Endothelial cell of umbilical vein (primary cell): ENCODE measurements at regions of chr2 and their contacts with region 1.

Region 1: GRCh38 chr2:45993476-45993991 is 303.7 kb upstream of the EPAS1 start:
- DNase-seq: peak; percentile 75
- H3K4me3 ChIP-seq: no peak overlapping the region
- H3K27ac ChIP-seq: no peak overlapping the region
- H3K4me1 ChIP-seq: no peaks in the 10 kb centered on the region
- H3K27me3 ChIP-seq: no peaks in the 10 kb centered on the region
- CTCF ChIP-seq: peak; percentile 72 to 74
- POLR2A ChIP-seq: no peak

Region 2: GRCh38 chr2:45922571-45922988 is 71.0 kb before region 1 on chr2:
- CTCF ChIA-PET with region 1: no interaction called
- POLR2A ChIA-PET with region 1: no interaction called
- dilution Hi-C with region 1: no loop called
- intact Hi-C with region 1: no loop called
- DNase-seq: no peak
- H3K4me3 ChIP-seq: no peak overlapping the region
- H3K27ac ChIP-seq: no peak overlapping the region
- H3K4me1 ChIP-seq: peaks cover 9% of the 10 kb centered on the region
- H3K27me3 ChIP-seq: no peaks in the 10 kb centered on the region
- CTCF ChIP-seq: no peak
- POLR2A ChIP-seq: no peak

Region 3: DNA sequence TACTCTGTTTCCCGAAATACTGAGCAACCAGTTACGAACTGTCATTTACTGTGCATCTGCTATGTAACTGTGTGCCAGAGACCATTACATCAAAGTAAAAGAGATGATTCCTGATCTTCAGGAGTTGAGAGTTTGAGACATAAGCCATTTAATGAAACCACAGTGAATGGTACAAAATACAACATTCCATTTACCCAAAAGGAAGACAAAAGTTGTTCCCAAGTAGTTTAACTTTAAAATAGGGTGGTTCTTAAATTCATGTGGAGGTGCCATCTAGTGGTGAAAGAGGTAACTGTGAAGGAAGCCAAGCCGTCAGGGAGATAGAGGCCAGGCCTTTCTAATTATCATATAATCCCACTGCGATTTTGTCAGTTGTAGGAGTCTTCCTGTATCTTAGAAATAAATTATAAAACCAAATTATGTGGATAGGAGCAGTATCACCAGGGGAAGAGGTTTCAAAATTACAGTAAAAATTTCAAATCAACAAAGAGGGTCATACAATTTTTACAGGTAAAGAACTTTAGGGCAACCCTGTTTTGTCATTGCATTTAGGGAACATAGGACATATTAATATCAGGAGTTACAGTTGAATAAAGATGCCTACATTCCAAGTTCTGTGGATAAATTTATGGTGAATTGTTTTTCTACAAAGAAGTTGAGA is 371.4 kb after region 1 on chr2:
- CTCF ChIA-PET with region 1: interaction called, 26 read pairs
- POLR2A ChIA-PET with region 1: no interaction called
- dilution Hi-C with region 1: no loop called
- intact Hi-C with region 1: loop called (anchors 1 kb)
- DNase-seq: peak; percentile 70
- H3K4me3 ChIP-seq: no peak overlapping the region
- H3K27ac ChIP-seq: no peak overlapping the region
- H3K4me1 ChIP-seq: peaks cover 24% of the 10 kb centered on the region
- H3K27me3 ChIP-seq: no peaks in the 10 kb centered on the region
- CTCF ChIP-seq: peak; percentile 61 to 63
- POLR2A ChIP-seq: no peak

Region 4: DNA sequence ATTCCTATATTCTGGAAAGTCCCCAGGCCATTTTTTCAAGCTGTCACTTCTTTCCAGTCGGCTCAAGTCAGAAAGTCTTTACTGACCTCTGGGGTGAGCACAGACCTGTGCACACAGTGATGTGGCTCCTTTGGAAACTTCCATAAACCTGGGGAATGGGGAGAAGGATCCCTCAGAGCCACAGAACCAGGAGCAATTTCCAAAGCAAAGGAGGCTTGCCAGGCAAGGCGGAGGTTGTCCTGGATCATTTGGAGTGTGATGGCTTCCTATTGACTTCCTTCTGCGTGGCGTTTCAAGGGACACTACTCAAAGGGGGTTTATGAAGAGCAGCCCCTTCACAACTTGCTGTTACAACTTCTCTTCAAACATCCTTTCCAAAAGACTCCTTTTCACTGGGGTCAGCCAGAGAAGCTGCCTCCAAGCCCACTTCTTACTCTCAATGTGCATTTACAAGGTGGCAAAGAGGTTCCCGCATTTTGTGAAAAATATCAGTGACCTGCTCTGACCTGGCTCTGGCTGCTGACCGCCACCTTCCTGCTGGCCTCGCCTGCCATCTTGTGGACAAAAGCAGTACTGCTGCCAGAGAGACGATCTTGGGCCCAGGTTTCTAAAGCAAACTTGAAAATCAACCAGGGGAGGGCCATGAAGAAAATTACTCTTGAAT is 467.6 kb after region 1 on chr2:
- CTCF ChIA-PET with region 1: interaction called, 3 read pairs
- POLR2A ChIA-PET with region 1: no interaction called
- dilution Hi-C with region 1: no loop called
- intact Hi-C with region 1: loop called (anchors 1 kb)
- DNase-seq: peak; percentile 72
- H3K4me3 ChIP-seq: no peak overlapping the region
- H3K27ac ChIP-seq: no peak overlapping the region
- H3K4me1 ChIP-seq: no peaks in the 10 kb centered on the region
- H3K27me3 ChIP-seq: no peaks in the 10 kb centered on the region
- CTCF ChIP-seq: peak; percentile 93
- POLR2A ChIP-seq: no peak